Mammary epithelial cell (primary cell): ENCODE measurements at regions of chr3 and their contacts with region 1.

Region 1: GRCh38 chr3:192444096-192444790 is 283.1 kb downstream of the FGF12 start:
- DNase-seq: peak; percentile 33
- H3K4me3 ChIP-seq: no peak overlapping the region
- H3K27ac ChIP-seq: no peak overlapping the region
- H3K4me1 ChIP-seq: no peaks in the 10 kb centered on the region
- H3K27me3 ChIP-seq: peaks cover 2% of the 10 kb centered on the region
- CTCF ChIP-seq: peak; percentile 99

Region 2: DNA sequence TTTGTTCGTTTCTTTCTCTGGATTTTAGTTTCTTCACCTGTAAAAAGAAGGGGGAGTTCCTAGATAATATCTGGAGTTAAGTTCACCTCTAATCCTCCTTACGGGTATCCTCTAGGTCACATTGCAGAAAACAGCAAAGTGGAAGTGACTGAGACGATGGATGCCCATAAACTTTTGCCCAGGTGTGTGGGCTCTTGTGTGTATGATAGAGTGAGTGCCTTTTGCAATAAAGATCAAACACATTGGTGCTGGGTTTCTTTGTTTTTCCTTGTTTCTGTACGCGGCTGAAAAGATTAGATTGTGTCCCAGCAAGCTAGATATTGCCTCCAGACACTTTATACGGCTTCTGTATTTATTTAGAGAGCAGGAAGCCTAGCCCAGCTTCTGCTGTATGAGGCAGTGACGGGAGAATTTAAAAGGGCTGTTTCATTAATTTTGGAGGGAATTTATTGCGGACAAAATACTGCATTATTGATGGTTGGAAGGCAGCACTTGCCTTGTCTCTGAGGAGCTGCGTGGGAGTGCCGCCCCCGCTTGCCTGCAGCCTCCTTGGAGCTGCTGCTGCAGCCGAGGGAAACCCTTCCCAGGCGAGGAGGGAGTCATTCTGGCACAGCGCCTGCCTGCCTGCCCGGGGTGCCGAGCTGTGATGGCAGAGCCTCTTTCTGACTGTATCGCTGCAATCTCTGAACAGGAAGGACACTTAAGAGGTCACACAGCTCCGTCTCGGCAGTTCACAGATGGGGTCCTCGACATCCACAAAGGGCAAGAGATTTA is 944.7 kb before region 1 on chr3:
- CTCF ChIA-PET with region 1: no interaction called
- dilution Hi-C with region 1: no loop called
- in situ Hi-C with region 1: no loop called
- intact Hi-C with region 1: loop called (anchors 5 kb)
- DNase-seq: peak; percentile 65
- H3K4me3 ChIP-seq: peak overlapping the region; percentile 13 to 49 (median 31)
- H3K27ac ChIP-seq: no peak overlapping the region
- H3K4me1 ChIP-seq: peaks cover 14% of the 10 kb centered on the region
- H3K27me3 ChIP-seq: no peaks in the 10 kb centered on the region
- CTCF ChIP-seq: no peak

Region 3: GRCh38 chr3:192130534-192131132 is 313.6 kb before region 1 on chr3:
- CTCF ChIA-PET with region 1: no interaction called
- dilution Hi-C with region 1: no loop called
- in situ Hi-C with region 1: loop called in 1 of 2 experiments (anchors 10 kb)
- intact Hi-C with region 1: loop called (anchors 1 kb)
- DNase-seq: peak; percentile 37
- H3K4me3 ChIP-seq: no peak overlapping the region
- H3K27ac ChIP-seq: no peak overlapping the region
- H3K4me1 ChIP-seq: no peaks in the 10 kb centered on the region
- H3K27me3 ChIP-seq: no peaks in the 10 kb centered on the region
- CTCF ChIP-seq: peak; percentile 84 to 95

Region 4: DNA sequence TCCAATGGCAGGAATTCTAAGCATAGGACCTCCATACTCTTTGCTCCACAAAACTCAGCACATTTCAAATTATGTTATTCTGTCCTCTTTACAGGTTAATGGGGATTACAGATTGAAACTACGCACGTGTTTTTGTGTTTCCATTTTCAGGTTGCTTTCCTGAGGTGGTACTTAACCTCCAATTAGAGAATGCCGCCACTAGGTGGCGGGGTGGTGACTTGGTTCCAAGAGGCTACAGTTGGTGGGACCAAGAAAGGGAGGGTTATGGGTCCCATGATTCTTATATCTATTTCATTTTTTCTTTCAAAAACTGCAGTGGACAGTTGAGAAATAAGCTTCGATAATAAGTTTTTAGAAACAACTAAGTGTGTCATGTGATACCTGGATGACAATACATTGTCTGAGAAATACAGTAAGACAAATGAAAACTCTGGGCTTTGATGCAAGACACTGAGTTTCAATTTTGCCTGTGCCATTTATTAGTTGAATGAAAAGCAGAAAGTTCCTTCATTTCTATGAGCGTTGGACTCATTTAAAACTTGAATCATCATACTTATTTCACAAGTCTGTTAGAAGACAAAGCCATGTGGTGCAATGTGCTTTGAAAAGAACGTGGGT is 255.9 kb before region 1 on chr3:
- CTCF ChIA-PET with region 1: no interaction called
- dilution Hi-C with region 1: no loop called
- in situ Hi-C with region 1: no loop called
- intact Hi-C with region 1: loop called (anchors 1 kb)
- DNase-seq: peak; percentile 16
- H3K4me3 ChIP-seq: no peak overlapping the region
- H3K27ac ChIP-seq: no peak overlapping the region
- H3K4me1 ChIP-seq: no peaks in the 10 kb centered on the region
- H3K27me3 ChIP-seq: no peaks in the 10 kb centered on the region
- CTCF ChIP-seq: peak; percentile 75 to 80

Region 5: DNA sequence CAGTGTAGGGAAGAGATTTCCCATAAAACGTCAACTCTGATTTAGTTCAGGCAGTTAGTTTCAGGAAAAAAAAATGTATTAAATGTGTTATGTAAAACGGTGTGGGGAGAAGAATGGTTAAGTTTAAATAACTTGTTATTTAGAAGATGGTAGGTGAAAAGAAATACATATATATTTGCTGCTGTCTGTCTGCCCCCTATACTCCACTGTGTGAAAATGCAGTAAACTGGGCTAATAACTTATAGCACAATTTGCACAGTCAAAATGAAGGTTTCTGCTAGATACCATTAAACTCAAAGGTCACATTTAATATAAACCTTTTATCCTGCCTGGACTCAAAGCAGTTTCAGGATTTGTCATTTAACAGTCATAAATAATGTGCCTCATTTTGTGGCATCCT is 231.9 kb before region 1 on chr3:
- CTCF ChIA-PET with region 1: interaction called, 4 read pairs
- dilution Hi-C with region 1: loop called (anchors 25 kb)
- in situ Hi-C with region 1: no loop called
- intact Hi-C with region 1: no loop called
- DNase-seq: no peak
- H3K4me3 ChIP-seq: no peak overlapping the region
- H3K27ac ChIP-seq: no peak overlapping the region
- H3K4me1 ChIP-seq: no peaks in the 10 kb centered on the region
- H3K27me3 ChIP-seq: no peaks in the 10 kb centered on the region
- CTCF ChIP-seq: peak in 1 of 2 donors; percentile 35

Region 6: DNA sequence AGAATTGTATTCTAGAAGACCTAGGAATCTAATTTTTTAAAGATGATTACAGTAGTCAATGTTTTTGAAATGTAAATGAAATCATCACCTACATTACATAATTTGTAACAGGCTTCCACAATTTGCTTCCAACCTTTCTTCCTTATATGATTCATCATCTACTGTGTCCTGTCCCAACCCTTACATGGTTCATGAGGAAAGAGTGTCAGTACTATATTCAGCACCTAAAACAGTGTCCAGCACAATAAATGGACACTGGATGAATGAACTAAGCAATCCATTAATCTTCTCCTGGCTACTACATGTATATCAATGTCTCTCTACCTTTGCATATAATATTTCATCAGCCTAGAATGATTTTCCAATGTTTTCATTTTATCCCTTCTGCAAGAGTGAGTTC is 270.9 kb after region 1 on chr3:
- CTCF ChIA-PET with region 1: no interaction called
- dilution Hi-C with region 1: no loop called
- in situ Hi-C with region 1: no loop called
- intact Hi-C with region 1: no loop called
- DNase-seq: no peak
- H3K4me3 ChIP-seq: no peak overlapping the region
- H3K27ac ChIP-seq: no peak overlapping the region
- H3K4me1 ChIP-seq: no peaks in the 10 kb centered on the region
- H3K27me3 ChIP-seq: no peaks in the 10 kb centered on the region
- CTCF ChIP-seq: no peak